Activated naive CD4-positive, alpha-beta T cell treated with anti-CD3 and anti-CD28 coated beads for 36 hours (primary cell): ENCODE measurements at regions of chr12 and their contacts with region 1.

Region 1: GRCh38 chr12:11576104-11576503 is 73.4 kb upstream of the ETV6 start:
- DNase-seq: peak; percentile 87
- H3K4me3 Mint-ChIP-seq: no peak overlapping the region
- H3K27ac Mint-ChIP-seq: no peak overlapping the region
- H3K4me1 Mint-ChIP-seq: peaks cover 19% of the 10 kb centered on the region
- H3K27me3 Mint-ChIP-seq: peaks cover 2% of the 10 kb centered on the region

Region 2: DNA sequence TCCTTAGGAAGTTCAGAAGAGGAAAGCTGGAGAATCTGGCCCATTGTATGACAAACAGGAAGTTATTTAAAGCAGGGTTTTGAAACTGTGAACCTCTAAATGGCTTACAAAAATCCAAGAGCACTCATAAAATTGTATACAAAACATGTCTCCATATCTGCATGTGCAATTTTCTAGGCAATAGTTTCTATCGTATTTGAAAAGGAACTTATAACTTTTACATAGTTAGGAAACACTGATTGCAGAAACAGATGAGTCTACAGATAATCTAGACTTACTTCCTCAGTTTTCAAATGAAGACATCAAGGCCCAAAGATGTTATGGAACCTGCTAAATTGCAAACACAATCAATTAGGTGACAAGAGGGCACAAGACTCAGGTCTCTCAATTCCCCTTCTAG is 20.0 kb after region 1 on chr12:
- CTCF ChIA-PET with region 1: no interaction called
- intact Hi-C with region 1: no loop called
- DNase-seq: no peak
- H3K4me3 Mint-ChIP-seq: no peak overlapping the region
- H3K27ac Mint-ChIP-seq: no peak overlapping the region
- H3K4me1 Mint-ChIP-seq: peaks cover 6% of the 10 kb centered on the region
- H3K27me3 Mint-ChIP-seq: no peaks in the 10 kb centered on the region

Region 3: DNA sequence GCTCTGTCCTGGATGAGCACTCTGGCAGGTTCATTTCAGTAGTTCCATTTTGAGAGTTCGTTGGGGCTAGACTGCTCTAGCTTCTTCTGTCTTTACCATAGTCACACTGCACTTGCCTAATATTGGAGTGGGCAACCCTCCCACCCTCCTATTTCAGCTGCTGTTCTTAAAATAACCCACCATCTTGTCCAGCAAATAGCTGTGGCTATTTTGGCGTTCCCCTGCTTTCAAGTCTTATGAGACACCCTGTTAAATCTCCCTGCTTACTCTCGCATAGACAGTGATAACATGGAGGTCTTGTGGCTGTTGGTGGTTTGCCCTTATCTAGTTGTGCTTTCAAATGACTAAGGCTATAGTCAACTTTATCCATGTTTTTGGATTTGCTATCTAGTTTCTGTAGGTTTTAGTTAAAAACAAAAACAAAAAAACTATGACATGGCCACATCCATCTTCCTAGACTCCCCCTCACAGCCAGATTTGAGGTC is 625.2 kb after region 1 on chr12:
- CTCF ChIA-PET with region 1: no interaction called
- intact Hi-C with region 1: no loop called
- DNase-seq: no peak
- H3K4me3 Mint-ChIP-seq: no peak overlapping the region
- H3K27ac Mint-ChIP-seq: no peak overlapping the region
- H3K4me1 Mint-ChIP-seq: no peaks in the 10 kb centered on the region
- H3K27me3 Mint-ChIP-seq: no peaks in the 10 kb centered on the region

Region 4: DNA sequence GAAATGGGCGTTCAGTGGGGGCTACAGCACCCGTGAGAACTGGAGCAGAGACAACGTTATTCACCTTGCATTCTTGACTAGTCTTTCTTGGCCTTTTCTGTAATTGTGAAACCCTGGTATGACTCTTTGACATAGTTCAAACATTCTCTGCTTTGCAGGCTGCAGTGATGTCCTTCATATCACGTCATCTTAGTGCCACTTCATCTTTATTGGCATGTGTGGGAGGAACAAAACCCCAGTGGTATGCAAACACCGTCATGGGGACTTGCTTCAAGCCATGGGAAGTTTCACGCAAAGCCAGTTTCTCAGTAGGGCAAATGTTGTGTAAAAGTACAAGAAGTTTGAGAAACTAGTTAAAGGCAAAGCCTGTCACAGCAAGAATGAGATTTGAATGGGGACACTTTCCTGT is 1006.8 kb after region 1 on chr12:
- CTCF ChIA-PET with region 1: no interaction called
- intact Hi-C with region 1: loop called (anchors 10 kb)
- DNase-seq: peak; percentile 81
- H3K4me3 Mint-ChIP-seq: peak overlapping the region; percentile 26
- H3K27ac Mint-ChIP-seq: peak overlapping the region; percentile 89
- H3K4me1 Mint-ChIP-seq: peaks cover 44% of the 10 kb centered on the region
- H3K27me3 Mint-ChIP-seq: peaks cover under 1% of the 10 kb centered on the region